Sciatic nerve (tissue), 2 donors: ENCODE measurements at regions of chr1 and their contacts with region 1.

Region 1: GRCh38 chr1:83641206-83641658 is 357.7 kb downstream of the TTLL7 start:
- DNase-seq: no peak
- ATAC-seq: peak; percentile 54

Region 2: DNA sequence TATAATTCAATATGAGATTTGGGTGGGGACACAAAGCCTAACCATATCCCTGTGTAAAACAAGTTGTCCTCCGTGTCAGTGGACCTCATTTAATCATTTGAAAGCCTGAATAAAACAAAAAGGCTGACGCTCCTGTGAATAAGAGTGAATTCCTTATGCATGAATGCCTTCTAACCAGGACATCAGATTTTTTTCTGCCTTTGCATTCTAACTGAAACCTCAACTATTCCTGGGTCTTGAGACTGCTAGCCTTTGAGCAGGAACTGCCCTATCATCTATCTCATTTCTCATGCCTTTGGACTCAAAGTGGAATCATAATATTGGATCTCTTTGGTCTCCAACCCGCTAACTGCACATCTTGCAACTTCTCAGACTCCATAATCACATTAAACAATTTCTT is 1191.6 kb before region 1 on chr1:
- intact Hi-C with region 1: no loop called
- DNase-seq: no peak
- ATAC-seq: no peak

Region 3: GRCh38 chr1:83692524-83693381 is 51.5 kb after region 1 on chr1:
- intact Hi-C with region 1: loop called (anchors 1 kb)
- DNase-seq: no peak
- ATAC-seq: peak; percentile 55